Adrenal gland (tissue), 19 donors: ENCODE measurements at regions of chr19 and their contacts with region 1.

Region 1: DNA sequence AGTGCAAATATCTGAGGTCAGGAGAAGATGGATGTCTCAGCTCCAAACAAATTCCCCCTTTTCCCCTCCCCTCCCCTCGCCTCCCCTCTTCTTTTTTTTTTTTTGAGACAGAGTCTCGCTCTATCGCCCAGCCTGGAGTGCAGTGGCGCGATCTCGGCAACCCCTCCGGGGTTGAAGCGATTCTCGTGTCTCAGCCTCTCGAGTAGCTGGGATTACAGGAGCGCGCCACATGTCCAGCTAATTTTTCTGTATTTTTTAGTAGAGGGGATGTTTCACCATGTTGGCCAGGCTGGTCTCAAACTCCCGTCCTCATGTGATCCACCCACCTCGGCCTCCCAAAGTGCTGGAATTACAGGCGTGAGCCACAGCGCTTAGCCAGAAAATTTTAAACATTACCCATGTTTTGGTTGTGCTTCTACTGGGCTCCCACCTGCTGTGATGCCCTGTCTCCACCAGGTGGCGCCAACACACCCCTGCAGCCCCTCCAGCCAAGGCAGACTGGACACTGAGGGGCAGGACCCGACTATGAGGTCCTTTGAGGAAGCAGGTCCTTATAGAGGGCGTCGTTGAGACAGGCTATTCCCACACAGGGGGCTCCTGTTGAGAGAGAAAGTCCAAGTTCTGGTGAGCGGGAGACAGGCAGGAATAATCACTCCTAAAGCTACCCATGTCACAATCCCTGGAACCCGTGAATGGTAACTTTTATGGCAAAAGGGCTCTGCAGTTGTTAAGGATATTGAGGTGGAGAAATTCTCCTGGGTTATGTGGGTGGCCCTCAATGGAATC is 6.3 kb downstream of the ERICH4 start:
- DNase-seq: peak; percentile 65 to 86 (median 79)
- H3K4me3 ChIP-seq: no peak overlapping the region
- H3K27ac ChIP-seq: no peak overlapping the region
- H3K4me1 ChIP-seq: no peaks in the 10 kb centered on the region
- H3K27me3 ChIP-seq: no peaks in the 10 kb centered on the region
- CTCF ChIP-seq: peak; percentile 87 to 99 (median 98)
- POLR2A ChIP-seq: no peak

Region 2: GRCh38 chr19:41386442-41386841 is 62.8 kb before region 1 on chr19:
- intact Hi-C with region 1: no loop called
- DNase-seq: no peak
- H3K4me3 ChIP-seq: no peak overlapping the region
- H3K27ac ChIP-seq: no peak overlapping the region
- H3K4me1 ChIP-seq: no peaks in the 10 kb centered on the region
- H3K27me3 ChIP-seq: no peaks in the 10 kb centered on the region
- CTCF ChIP-seq: no peak
- POLR2A ChIP-seq: no peak

Region 3: GRCh38 chr19:41479757-41480191 is 30.5 kb after region 1 on chr19:
- intact Hi-C with region 1: no loop called
- DNase-seq: peak; percentile 84 to 96 (median 95)
- H3K4me3 ChIP-seq: peak overlapping the region in 1 of 4 donors; percentile 30
- H3K27ac ChIP-seq: peak overlapping the region; percentile 34 to 90 (median 76)
- H3K4me1 ChIP-seq: peaks cover 0 to 7% of the 10 kb centered on the region in 2 donors
- H3K27me3 ChIP-seq: peaks cover 6% of the 10 kb centered on the region
- CTCF ChIP-seq: no peak
- POLR2A ChIP-seq: peak in 1 of 2 donors; percentile 85

Region 4: DNA sequence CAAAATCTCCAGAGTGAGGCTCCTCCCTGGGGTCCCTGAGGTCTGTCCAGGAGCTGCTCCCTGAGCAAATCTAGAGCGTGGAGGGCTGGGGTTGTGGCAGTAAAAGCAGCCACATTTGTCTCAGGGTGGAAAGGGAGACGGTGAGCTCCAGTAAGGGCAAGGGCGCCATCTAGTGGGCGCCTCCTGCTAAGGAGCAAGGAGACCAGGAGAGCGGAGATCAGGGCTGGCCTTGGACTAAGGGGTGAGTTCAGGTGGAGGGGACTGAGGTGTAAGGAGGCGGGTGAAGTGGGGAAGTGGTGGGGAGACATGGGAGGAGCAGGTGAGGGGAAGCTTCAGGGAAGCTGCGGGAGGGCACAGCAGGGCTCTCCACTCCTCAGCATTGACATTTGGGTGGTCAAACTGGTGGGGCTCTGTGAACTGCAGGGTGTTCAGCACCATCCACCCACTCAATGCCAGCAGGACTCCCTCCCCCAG is 121.4 kb after region 1 on chr19:
- intact Hi-C with region 1: loop called (anchors 5 kb)
- DNase-seq: peak; percentile 65 to 88 (median 81)
- H3K4me3 ChIP-seq: no peak overlapping the region
- H3K27ac ChIP-seq: no peak overlapping the region
- H3K4me1 ChIP-seq: no peaks in the 10 kb centered on the region
- H3K27me3 ChIP-seq: peaks cover 37% of the 10 kb centered on the region
- CTCF ChIP-seq: peak; percentile 71 to 87 (median 84)
- POLR2A ChIP-seq: no peak